ENCODE measurements at regions of chr6 and their contacts with region 1.

Region 1: DNA sequence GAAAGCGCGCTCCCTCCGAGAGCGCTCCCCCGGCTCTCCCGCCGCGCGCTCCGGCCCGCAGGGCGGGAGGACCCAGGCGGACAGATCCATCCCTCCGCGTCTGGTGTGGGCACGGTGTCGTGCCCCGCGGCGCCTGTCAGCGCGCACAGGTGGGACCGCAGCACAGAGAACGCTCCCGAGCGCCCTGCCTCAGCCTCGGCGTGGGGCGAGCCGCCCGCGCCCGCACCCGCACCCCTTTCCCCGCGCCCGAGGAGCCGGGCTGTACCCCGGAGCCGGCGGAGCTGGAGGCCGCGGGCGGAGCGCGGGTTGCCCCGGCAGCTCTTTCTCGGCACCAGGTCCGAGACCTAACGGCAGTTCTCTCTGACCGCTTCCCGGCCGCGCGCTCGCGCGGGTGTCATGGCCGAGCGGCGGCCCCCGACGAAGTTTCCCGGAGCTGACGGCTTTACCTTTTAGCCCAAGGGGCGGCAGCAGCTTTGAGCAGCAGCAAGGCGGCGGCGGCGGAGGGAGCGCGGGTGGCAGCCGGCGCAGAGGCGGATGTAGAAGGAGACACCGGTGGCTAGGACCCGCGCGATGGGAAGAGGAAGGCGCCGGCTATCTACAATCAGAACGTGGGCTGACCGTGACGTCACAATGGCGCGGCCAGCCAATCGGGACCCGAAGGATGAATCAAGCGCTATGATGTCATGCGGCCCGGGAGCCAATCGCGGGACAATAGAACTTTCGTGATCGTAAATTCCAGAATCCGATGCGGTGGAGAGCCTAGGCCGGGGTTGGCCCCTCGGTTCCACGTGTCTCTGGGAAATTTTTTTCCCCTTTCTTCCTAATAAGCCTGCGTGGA is at the start of gene ELOVL5:
- DNase-seq: peak; percentile 92
- ATAC-seq: peak; percentile 78
- H3K4me3 Mint-ChIP-seq: peak within 1 kb of the TSS; percentile 94
- H3K27ac Mint-ChIP-seq: peak within 1 kb of the TSS; percentile 97
- H3K4me1 Mint-ChIP-seq: peaks cover 52% of the 10 kb centered on the region
- H3K27me3 Mint-ChIP-seq: no peaks in the 10 kb centered on the region
- CTCF ChIP-seq: no peak
- total RNA-seq, gene ELOVL5: 109 and 127 TPM in 2 replicates

Region 2: GRCh38 chr6:53199156-53199555 is 149.4 kb before region 1 on chr6:
- CTCF ChIA-PET with region 1: no interaction called
- POLR2A ChIA-PET with region 1: no interaction called
- intact Hi-C with region 1: loop called (anchors 2 kb)
- DNase-seq: no peak
- ATAC-seq: peak; percentile 97
- H3K4me3 Mint-ChIP-seq: peak overlapping the region; percentile 17
- H3K27ac Mint-ChIP-seq: peak overlapping the region; percentile 80
- H3K4me1 Mint-ChIP-seq: peaks cover 75% of the 10 kb centered on the region
- H3K27me3 Mint-ChIP-seq: no peaks in the 10 kb centered on the region
- CTCF ChIP-seq: no peak

Region 3: GRCh38 chr6:53244958-53245357 is 103.6 kb before region 1 on chr6:
- CTCF ChIA-PET with region 1: interaction called, 6 read pairs
- POLR2A ChIA-PET with region 1: interaction called, 9 read pairs
- intact Hi-C with region 1: loop called (anchors 1 kb)
- DNase-seq: peak; percentile 42
- ATAC-seq: peak; percentile 83
- H3K4me3 Mint-ChIP-seq: peak overlapping the region; percentile 63
- H3K27ac Mint-ChIP-seq: peak overlapping the region; percentile 96
- H3K4me1 Mint-ChIP-seq: peaks cover 93% of the 10 kb centered on the region
- H3K27me3 Mint-ChIP-seq: no peaks in the 10 kb centered on the region
- CTCF ChIP-seq: no peak

Region 4: GRCh38 chr6:53300656-53301551 is 47.7 kb before region 1 on chr6:
- CTCF ChIA-PET with region 1: no interaction called
- POLR2A ChIA-PET with region 1: interaction called, 10 read pairs
- intact Hi-C with region 1: loop called (anchors 2 kb)
- DNase-seq: no peak
- ATAC-seq: peak; percentile 68
- H3K4me3 Mint-ChIP-seq: peak overlapping the region; percentile 45
- H3K27ac Mint-ChIP-seq: peak overlapping the region; percentile 78
- H3K4me1 Mint-ChIP-seq: peaks cover 85% of the 10 kb centered on the region
- H3K27me3 Mint-ChIP-seq: no peaks in the 10 kb centered on the region
- CTCF ChIP-seq: no peak

Region 5: GRCh38 chr6:53330137-53330536 is 18.5 kb before region 1 on chr6:
- CTCF ChIA-PET with region 1: no interaction called
- POLR2A ChIA-PET with region 1: interaction called, 54 read pairs
- intact Hi-C with region 1: loop called (anchors 1 kb)
- DNase-seq: no peak
- ATAC-seq: no peak
- H3K4me3 Mint-ChIP-seq: no peak overlapping the region
- H3K27ac Mint-ChIP-seq: no peak overlapping the region
- H3K4me1 Mint-ChIP-seq: peaks cover 83% of the 10 kb centered on the region
- H3K27me3 Mint-ChIP-seq: no peaks in the 10 kb centered on the region
- CTCF ChIP-seq: no peak

Region 6: GRCh38 chr6:53359072-53359842 is 10.7 kb after region 1 on chr6:
- CTCF ChIA-PET with region 1: no interaction called
- POLR2A ChIA-PET with region 1: interaction called, 62 read pairs
- intact Hi-C with region 1: loop called (anchors 1 kb)
- DNase-seq: peak; percentile 91
- ATAC-seq: peak; percentile 92
- H3K4me3 Mint-ChIP-seq: peak overlapping the region; percentile 92
- H3K27ac Mint-ChIP-seq: peak overlapping the region; percentile 99
- H3K4me1 Mint-ChIP-seq: peaks cover 59% of the 10 kb centered on the region
- H3K27me3 Mint-ChIP-seq: no peaks in the 10 kb centered on the region
- CTCF ChIP-seq: no peak

Region 7: DNA sequence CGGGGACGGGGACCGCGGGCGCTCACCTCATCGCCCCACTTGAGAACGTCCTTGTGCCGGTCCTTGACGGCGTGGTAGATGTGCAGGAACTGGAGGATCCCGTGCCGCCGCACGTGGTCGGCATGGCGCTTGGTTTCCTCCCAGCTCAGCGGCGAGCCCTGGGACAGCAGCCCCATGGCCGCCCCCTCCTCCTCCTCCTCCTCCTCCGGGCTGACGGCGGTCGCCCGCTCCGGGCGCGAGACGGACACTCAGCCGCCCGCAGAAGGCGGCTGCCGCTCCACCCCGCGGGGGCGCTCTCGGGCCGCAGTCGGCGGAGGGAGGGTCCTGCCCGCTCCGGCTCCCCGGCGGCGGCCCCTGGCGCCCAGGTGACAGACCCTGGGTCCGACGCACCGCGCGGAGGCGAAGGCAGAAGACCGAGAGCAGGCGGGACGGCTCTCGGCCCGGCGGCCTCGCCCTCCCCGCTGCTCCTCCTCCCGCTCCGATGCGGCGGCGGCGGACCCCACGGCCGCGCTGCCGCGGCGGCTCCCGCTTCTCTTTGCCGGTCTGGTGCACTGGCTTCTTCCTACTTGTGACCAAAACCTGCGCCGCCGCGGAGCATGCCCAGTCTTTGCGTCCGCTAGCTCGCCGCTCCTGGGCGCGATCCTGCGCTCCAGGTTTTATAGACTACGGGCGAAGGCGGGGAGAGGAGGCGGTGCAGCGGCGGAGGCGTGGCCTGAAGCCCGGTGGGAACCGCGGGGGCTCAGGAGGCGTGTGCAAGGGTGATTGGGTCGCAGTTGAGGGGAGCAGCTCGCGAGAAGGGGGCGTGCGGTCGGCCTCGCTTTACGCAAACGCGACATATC is 196.1 kb after region 1 on chr6 and contains the start of gene GCLC:
- CTCF ChIA-PET with region 1: no interaction called
- POLR2A ChIA-PET with region 1: interaction called, 3 read pairs
- intact Hi-C with region 1: loop called (anchors 5 kb)
- DNase-seq: peak; percentile 87
- ATAC-seq: peak; percentile 71
- H3K4me3 Mint-ChIP-seq: peak within 1 kb of the TSS; percentile 93
- H3K27ac Mint-ChIP-seq: peak within 1 kb of the TSS; percentile 91
- H3K4me1 Mint-ChIP-seq: peaks cover 67% of the 10 kb centered on the region
- H3K27me3 Mint-ChIP-seq: no peaks in the 10 kb centered on the region
- CTCF ChIP-seq: peak; percentile 37
- total RNA-seq, gene GCLC: 26.6 and 27.1 TPM in 2 replicates